B cell (primary cell): ENCODE measurements at regions of chr1 and their contacts with region 1.

Region 1: DNA sequence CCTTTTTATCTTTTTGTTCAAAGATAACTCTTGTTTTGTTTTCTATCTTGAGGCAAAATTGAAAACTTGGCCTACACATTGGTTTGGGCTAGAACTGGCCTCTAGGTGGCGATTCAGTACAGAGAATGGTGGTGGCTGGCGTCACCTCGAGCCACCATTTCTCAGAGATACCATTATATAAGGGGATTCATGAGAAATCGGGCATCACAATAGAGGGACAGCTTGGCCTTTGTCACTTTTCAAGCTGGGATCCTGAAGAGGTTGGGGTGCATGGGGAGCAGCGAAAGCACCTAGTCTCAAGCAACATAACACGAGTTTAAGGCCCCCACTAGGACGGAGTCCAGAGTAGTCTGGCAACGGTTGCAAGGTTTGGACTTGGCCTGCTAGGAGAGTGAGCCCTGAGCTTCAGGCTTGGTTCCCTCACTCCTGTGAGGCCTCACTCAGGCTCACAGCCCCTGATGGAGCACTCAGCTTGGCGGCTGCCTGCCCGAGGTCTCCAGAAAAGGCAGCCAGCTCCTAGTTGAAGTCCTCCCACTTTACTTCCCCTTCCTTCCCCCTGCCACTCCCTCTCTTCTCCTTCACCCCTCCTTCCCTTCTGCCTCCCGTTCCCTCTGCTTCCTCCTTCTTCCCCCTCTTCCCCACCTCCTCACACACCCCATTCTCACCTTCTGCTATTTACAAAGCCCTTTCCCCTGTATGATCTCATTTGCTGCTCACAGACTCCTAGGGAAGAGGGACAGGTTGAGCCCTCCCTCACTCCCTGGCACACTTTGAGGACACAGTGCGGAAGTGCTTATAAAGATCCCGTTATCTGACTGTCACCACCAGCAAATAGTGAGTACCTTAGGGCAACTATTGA is 67.8 kb downstream of the LRIG2 start:
- DNase-seq: peak; percentile 58
- ATAC-seq: peak; percentile 51
- H3K4me3 ChIP-seq: no peak overlapping the region
- H3K4me3 Mint-ChIP-seq: peak overlapping the region; percentile 19
- H3K27ac ChIP-seq: no peak overlapping the region
- H3K27ac Mint-ChIP-seq: no peak overlapping the region
- H3K4me1 ChIP-seq: peaks cover 0 to 5% of the 10 kb centered on the region in 2 donors
- H3K4me1 Mint-ChIP-seq: peaks cover 2% of the 10 kb centered on the region
- H3K27me3 ChIP-seq: no peaks in the 10 kb centered on the region
- H3K27me3 Mint-ChIP-seq: no peaks in the 10 kb centered on the region
- CTCF ChIP-seq: peak; percentile 76

Region 2: GRCh38 chr1:113129529-113130185 is 11.2 kb before region 1 on chr1:
- CTCF ChIA-PET with region 1: interaction called, 16 read pairs
- POLR2A ChIA-PET with region 1: no interaction called
- intact Hi-C with region 1: no loop called
- DNase-seq: no peak
- ATAC-seq: no peak
- H3K4me3 ChIP-seq: no peak overlapping the region
- H3K4me3 Mint-ChIP-seq: no peak overlapping the region
- H3K27ac ChIP-seq: no peak overlapping the region
- H3K27ac Mint-ChIP-seq: no peak overlapping the region
- H3K4me1 ChIP-seq: no peaks in the 10 kb centered on the region
- H3K4me1 Mint-ChIP-seq: no peaks in the 10 kb centered on the region
- H3K27me3 ChIP-seq: no peaks in the 10 kb centered on the region
- H3K27me3 Mint-ChIP-seq: no peaks in the 10 kb centered on the region
- CTCF ChIP-seq: no peak

Region 3: DNA sequence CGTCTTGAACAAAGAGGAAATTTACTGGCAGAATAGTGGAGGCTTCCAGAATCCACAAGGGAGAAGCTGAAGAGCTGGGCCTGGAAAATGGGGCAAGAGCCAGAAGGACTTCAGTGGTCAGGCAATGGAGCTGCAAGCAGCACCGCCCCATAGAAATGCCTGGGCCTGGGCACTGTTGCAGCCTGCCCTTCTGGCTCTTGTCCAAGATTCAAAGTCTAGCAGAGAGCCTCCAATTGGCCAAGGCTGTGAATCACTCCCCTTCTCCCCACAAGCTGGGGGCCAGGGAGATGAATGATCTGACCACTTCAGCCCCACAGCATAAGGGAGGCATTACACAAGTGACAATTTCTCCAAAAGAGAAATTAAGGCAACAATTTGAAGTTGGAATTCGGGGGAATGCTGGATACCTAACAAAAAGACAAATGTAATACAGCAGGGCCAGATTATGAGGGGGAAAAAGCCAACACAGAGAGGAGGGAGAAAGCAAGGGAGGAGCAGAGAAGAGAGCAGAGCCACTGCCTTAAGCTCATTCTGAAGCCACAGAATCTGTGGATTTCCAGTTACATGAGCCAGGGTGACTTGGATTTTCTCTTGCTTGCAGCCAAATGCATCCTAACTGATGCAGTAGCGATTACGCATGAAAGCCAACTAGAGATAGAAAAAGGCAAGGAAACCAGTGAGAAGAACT is 12.4 kb after region 1 on chr1:
- CTCF ChIA-PET with region 1: no interaction called
- POLR2A ChIA-PET with region 1: no interaction called
- intact Hi-C with region 1: no loop called
- DNase-seq: no peak
- ATAC-seq: no peak
- H3K4me3 ChIP-seq: no peak overlapping the region
- H3K4me3 Mint-ChIP-seq: no peak overlapping the region
- H3K27ac ChIP-seq: no peak overlapping the region
- H3K27ac Mint-ChIP-seq: no peak overlapping the region
- H3K4me1 ChIP-seq: no peaks in the 10 kb centered on the region
- H3K4me1 Mint-ChIP-seq: no peaks in the 10 kb centered on the region
- H3K27me3 ChIP-seq: no peaks in the 10 kb centered on the region
- H3K27me3 Mint-ChIP-seq: peaks cover 3% of the 10 kb centered on the region
- CTCF ChIP-seq: no peak

Region 4: DNA sequence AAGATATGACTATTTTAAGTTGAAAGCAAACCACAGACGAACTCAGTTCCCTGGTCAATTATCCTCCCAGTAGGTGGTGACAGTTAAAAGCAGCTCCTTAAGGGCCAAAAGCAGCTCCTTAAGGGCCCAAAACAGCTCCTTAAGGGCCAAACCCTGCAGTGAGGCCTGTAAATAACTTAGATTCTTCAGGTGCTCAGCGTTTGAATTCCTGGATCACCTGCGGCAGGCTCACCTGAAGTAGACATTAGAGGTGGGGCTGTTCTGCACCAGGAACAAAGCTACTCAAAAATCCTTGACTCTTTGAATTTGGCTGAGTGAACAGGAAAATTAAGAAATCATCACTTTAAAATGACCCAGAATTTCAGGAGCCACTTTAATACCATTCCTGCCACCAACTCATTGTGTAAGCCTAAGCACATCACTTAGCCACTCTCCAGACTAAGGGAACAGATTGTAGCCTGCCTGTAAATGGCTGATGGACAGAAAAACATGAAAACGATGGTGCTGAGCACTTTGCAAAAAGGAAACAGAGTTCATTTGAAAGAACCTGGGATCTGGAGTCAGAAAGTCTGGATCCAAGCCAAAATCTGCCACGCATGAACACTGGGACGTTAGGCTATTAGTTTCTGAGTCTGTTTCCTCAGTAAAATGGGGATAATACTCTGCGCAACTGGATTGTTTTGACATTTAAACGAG is 59.1 kb after region 1 on chr1:
- CTCF ChIA-PET with region 1: no interaction called
- POLR2A ChIA-PET with region 1: no interaction called
- intact Hi-C with region 1: no loop called
- DNase-seq: no peak
- ATAC-seq: no peak
- H3K4me3 ChIP-seq: no peak overlapping the region
- H3K4me3 Mint-ChIP-seq: no peak overlapping the region
- H3K27ac ChIP-seq: no peak overlapping the region
- H3K27ac Mint-ChIP-seq: no peak overlapping the region
- H3K4me1 ChIP-seq: no peaks in the 10 kb centered on the region
- H3K4me1 Mint-ChIP-seq: no peaks in the 10 kb centered on the region
- H3K27me3 ChIP-seq: peaks cover 0 to 3% (median 0%) of the 10 kb centered on the region in 4 experiments
- H3K27me3 Mint-ChIP-seq: peaks cover 20% of the 10 kb centered on the region
- CTCF ChIP-seq: no peak

Region 5: DNA sequence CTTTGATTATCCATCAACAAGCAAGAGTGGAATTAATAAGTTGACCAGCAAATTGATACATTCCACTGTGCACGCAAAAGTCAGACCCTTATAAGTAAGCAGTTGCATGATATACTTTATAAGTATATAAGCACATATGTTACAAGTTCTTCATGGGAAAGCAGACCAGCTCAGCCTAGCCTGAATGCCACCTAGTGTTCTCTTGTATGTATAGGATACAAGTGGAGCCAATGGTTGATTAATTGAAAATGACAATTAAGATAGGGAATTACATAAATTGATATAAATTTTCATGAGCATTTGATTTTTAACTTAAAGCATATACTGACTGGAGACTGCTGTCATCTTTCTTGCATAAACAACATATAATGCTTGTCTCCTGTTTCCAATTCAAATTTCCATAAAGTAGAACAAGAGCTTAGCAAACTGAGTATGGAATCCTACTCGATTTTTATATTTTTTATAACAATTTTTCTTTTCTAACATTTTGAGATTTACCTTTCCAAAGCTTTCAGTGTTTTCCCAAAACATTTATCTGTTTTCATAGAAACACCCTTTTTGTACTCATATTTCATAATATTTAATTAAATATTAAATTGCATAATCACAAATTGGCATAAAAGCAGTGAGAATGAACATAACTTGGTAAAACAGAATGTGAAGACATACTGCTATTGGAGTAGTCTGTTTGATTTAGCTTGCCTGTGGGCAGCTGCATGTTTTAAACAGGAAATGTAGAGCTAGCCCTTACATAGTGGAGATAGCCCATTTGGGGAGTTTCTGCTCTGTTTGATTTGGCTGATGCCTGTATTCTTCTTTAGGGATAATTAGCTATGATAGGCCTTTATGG is 312.3 kb after region 1 on chr1:
- CTCF ChIA-PET with region 1: interaction called, 4 read pairs
- POLR2A ChIA-PET with region 1: no interaction called
- intact Hi-C with region 1: loop called (anchors 2 kb)
- DNase-seq: peak; percentile 5
- ATAC-seq: no peak
- H3K4me3 ChIP-seq: no peak overlapping the region
- H3K4me3 Mint-ChIP-seq: no peak overlapping the region
- H3K27ac ChIP-seq: no peak overlapping the region
- H3K27ac Mint-ChIP-seq: no peak overlapping the region
- H3K4me1 ChIP-seq: no peaks in the 10 kb centered on the region
- H3K4me1 Mint-ChIP-seq: no peaks in the 10 kb centered on the region
- H3K27me3 ChIP-seq: no peaks in the 10 kb centered on the region
- H3K27me3 Mint-ChIP-seq: peaks cover 14% of the 10 kb centered on the region
- CTCF ChIP-seq: peak; percentile 23

Region 6: GRCh38 chr1:113677250-113678158 is 536.7 kb after region 1 on chr1:
- CTCF ChIA-PET with region 1: interaction called, 11 read pairs
- POLR2A ChIA-PET with region 1: no interaction called
- intact Hi-C with region 1: no loop called
- DNase-seq: peak; percentile 39
- ATAC-seq: no peak
- H3K4me3 ChIP-seq: no peak overlapping the region
- H3K4me3 Mint-ChIP-seq: no peak overlapping the region
- H3K27ac ChIP-seq: no peak overlapping the region
- H3K27ac Mint-ChIP-seq: no peak overlapping the region
- H3K4me1 ChIP-seq: no peaks in the 10 kb centered on the region
- H3K4me1 Mint-ChIP-seq: no peaks in the 10 kb centered on the region
- H3K27me3 ChIP-seq: no peaks in the 10 kb centered on the region
- H3K27me3 Mint-ChIP-seq: no peaks in the 10 kb centered on the region
- CTCF ChIP-seq: peak; percentile 73

Region 7: GRCh38 chr1:114282751-114283403 is 1142.1 kb after region 1 on chr1:
- CTCF ChIA-PET with region 1: interaction called, 35 read pairs
- POLR2A ChIA-PET with region 1: no interaction called
- intact Hi-C with region 1: no loop called
- DNase-seq: peak; percentile 76
- ATAC-seq: peak; percentile 71
- H3K4me3 ChIP-seq: no peak overlapping the region
- H3K4me3 Mint-ChIP-seq: no peak overlapping the region
- H3K27ac ChIP-seq: no peak overlapping the region
- H3K27ac Mint-ChIP-seq: no peak overlapping the region
- H3K4me1 ChIP-seq: no peaks in the 10 kb centered on the region
- H3K4me1 Mint-ChIP-seq: no peaks in the 10 kb centered on the region
- H3K27me3 ChIP-seq: peaks cover 0 to 2% (median 0%) of the 10 kb centered on the region in 4 experiments
- H3K27me3 Mint-ChIP-seq: no peaks in the 10 kb centered on the region
- CTCF ChIP-seq: peak; percentile 91